BJ (cell line): ENCODE measurements at regions of chr15 and their contacts with region 1.

Region 1: DNA sequence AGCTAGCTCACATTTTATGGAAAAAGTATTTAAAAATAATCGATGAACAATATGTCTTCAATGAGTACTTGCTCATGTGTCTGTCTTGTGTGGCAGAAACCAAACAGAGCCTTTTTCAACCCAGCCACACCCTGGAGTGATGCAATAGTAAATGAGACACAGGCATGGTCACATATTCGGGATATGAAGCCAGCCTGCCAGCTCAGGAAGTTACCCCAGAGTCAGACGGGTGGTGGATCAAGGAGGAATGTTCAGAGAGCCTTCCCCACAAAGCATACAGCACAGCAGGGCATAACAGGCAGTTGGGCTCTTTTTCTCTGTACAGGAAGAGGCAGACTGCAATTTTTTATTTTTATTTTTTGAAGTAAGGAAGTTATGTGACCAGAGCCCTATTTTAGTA is 27.3 kb downstream of the LARP6 start:
- DNase-seq: peak; percentile 78
- H3K4me3 ChIP-seq: no peak overlapping the region
- H3K27me3 ChIP-seq: no peaks in the 10 kb centered on the region
- CTCF ChIP-seq: no peak

Region 2: GRCh38 chr15:70863450-70864218 is 37.0 kb after region 1 on chr15:
- CTCF ChIA-PET with region 1: interaction called, 43 read pairs
- POLR2A ChIA-PET with region 1: no interaction called
- DNase-seq: no peak
- H3K4me3 ChIP-seq: no peak overlapping the region
- H3K27me3 ChIP-seq: no peaks in the 10 kb centered on the region
- CTCF ChIP-seq: no peak

Region 3: DNA sequence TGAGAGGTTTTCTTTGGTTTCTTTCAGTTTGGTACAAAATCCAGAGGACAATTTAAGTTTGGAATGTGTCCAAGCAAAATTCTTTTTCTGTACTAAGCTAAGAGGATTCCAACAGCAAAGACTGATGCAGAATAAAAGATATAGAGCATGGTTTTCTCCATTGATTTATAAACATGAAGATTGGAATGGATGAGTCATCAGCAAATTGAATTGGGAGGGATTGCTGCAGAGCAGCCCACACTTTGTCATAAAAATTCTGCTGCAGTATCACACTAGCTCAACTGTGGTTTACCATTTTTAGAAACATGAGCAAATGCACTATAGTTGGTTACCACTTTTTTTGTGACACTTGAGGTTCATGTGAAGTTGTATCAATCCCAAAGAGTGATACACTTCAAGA is 43.4 kb after region 1 on chr15:
- CTCF ChIA-PET with region 1: interaction called, 84 read pairs
- POLR2A ChIA-PET with region 1: no interaction called
- DNase-seq: no peak
- H3K4me3 ChIP-seq: no peak overlapping the region
- H3K27me3 ChIP-seq: no peaks in the 10 kb centered on the region
- CTCF ChIP-seq: no peak

Region 4: DNA sequence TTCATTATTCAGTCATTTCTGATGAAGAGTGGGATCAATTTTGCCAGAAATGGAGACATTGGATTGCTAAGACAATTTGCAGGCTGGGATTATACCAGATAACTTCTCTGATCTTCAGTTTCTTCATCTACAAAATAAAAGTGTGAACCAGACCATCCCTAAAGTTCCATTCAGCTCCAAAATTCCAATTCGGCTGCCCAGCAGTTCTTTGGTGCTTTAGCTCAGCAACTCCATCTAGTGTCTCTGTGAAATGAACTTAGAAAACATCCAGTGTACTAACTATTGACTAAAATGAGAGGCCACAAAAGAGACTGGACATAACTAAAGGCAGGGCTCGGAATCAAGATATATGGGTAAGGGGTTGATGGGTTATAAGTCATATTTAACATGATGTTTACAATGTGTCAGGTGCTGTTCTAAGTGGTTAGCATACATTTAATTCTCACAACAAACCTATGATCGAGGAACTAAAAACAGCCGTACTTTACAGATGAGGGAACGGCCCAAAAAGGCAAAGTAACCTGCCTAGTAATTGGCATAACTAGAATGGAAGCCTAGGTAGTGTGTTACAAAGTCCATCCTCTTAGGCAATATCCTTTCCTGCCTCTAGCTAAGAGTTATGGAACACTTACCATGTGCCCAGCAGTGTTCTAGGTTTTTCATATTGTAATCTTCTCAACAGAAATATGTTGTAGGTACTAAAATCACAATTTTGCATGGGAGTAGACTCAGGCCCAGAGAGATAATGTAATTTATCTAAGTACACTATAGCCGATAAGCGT is 48.6 kb after region 1 on chr15:
- CTCF ChIA-PET with region 1: interaction called, 84 read pairs
- POLR2A ChIA-PET with region 1: no interaction called
- DNase-seq: no peak
- H3K4me3 ChIP-seq: no peak overlapping the region
- H3K27me3 ChIP-seq: no peaks in the 10 kb centered on the region
- CTCF ChIP-seq: peak; percentile 77